GM13977 (cell line): ENCODE measurements at regions of chr14 and their contacts with region 1.

Region 1: GRCh38 chr14:72894623-72895378 is 900 bp upstream of the DPF3 start:
- DNase-seq: no peak
- CTCF ChIP-seq: no peak

Region 2: DNA sequence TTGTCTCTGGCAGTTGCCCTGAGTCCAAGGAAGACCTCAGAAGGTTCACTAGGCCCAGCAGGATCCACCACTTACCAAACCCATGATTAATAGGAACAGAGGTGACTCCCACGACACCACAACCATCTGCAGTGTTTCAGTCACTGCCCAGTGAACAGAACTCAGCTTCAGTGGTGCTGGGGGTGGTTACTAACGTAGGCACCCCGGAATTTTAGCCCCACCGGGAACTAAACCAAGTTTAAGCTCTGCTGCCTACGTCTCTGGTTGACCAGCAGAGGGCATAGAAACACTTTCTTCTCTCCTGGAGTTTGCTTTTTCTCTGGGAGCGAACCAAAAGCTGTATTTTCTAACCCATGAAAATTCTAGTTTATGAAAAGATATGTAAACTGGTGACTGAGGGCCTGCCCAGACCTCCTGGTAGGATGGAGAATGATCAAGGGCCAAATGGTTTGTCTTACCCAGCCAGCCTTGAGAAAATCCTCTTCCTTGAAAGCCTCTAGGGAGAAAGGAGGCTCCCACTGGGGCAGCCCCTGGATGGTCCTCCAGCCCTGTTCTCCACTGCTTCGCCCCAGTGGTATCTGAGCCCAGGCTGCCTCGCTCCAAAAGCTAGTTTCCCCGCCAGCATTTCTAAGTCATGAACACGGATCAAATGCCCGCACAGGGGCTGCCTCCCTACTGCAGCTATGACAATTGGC is 380.7 kb before region 1 on chr14:
- in situ Hi-C with region 1: loop called (anchors 5 kb)
- DNase-seq: no peak
- CTCF ChIP-seq: peak; percentile 63

Region 3: DNA sequence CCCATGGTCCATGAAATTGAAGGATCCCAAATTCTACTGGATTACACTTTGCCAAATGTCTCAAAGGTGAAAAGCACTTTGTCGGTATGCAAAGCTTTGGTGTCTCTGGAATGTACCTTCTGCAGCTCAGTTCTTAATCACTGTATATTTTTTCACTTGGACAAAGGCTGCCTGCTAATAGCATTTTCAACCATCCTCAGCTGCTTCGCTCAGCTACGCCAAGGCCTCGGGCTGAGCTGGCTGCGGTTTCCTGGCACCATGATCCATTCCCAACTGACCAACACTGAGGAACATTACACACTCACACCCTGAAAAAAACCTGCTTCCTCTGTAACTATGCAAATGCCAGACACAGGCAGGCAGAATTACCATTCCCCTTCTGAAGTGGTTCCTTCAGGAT is 336.1 kb before region 1 on chr14:
- in situ Hi-C with region 1: no loop called
- DNase-seq: no peak
- CTCF ChIP-seq: no peak